PC-3 (cell line): ENCODE measurements at regions of chr13 and their contacts with region 1.

Region 1: DNA sequence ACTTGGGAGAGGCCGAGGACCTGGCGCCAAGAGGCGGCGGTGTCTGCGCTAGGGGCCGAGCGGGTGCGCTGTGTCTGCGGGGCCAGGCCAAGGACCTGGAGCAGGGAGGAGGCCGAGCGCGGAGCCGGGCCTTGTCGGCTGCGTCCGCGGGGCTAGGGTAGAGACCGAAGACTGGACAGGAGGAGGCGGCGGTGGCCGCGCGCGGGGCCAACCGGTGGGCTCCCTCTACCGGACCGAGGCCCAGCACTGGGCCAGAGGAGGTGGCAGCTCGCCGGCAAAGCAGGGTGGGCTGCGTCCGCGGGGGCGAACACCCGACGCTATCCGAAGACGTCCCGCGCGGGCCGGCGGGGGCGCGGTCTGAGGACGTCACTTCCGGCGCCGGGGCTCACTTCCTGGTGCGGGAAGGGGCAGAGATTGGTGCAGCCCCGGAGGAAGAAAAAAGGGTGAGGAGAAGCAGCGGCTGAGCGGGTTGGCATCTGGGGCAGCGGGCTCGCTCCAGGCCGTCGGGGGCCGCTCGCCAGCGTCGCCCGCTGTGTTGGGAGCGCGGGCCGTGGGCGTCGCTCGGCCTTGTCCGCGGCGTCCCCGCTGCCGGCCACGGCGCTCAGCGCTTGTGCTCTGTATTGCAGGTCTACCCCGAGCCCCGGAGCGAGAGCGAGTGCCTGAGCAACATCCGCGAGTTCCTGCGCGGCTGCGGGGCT is 38.3 kb downstream of the ARHGEF7 start:
- DNase-seq: peak; percentile 82
- ATAC-seq: peak; percentile 81
- H3K4me3 ChIP-seq: peak overlapping the region; percentile 93
- H3K27ac ChIP-seq: peak overlapping the region; percentile 72
- H3K4me1 ChIP-seq: peaks cover 19% of the 10 kb centered on the region
- H3K27me3 ChIP-seq: peaks cover 22% of the 10 kb centered on the region
- CTCF ChIP-seq: no peak

Region 2: DNA sequence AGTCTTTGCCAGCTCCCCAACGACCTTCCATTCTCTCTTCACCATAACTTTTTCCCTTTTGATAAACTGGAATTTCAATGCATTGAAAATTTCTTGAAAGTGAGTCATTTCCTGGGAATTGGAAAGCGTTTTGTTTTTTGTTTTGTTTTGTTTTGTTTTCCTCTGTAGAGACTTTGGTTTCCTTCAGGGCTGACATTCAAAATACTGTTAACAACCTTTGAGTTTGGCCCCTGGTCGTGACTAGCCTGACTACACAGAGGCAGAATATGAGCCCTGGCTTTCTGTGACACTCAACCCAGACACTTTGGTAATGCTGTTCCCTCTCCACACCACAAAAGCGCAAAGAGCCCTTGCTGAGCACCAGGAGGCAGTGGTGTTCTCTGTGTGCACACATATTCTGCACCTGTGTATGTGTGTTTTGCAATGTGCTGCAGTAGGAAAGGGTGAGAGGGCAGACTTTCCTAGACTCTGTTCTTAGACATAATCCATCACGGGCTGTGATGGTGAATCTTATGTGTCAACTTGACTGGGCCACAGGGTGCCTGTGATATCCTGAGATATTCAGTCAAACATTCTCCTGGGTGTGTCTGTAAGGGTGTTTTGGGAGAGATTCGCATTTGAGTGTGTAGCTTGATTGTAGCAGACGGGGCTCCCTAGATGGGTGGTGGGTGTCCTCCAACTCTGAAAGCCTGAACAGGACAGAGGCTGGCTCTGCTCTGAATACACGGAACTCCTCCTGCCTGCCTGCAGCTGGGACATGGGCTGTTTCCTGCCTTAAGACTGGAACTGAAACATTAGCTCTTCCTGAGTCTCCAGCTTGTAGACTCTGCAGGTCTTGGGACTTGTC is 209.1 kb before region 1 on chr13:
- CTCF ChIA-PET with region 1: no interaction called
- POLR2A ChIA-PET with region 1: no interaction called
- intact Hi-C with region 1: loop called (anchors 10 kb)
- DNase-seq: peak; percentile 70
- ATAC-seq: peak; percentile 98
- H3K4me3 ChIP-seq: no peak overlapping the region
- H3K27ac ChIP-seq: no peak overlapping the region
- H3K4me1 ChIP-seq: peaks cover 9% of the 10 kb centered on the region
- H3K27me3 ChIP-seq: no peaks in the 10 kb centered on the region
- CTCF ChIP-seq: peak; percentile 86

Region 3: GRCh38 chr13:111066544-111066943 is 86.9 kb before region 1 on chr13:
- CTCF ChIA-PET with region 1: no interaction called
- POLR2A ChIA-PET with region 1: interaction called, 24 read pairs
- intact Hi-C with region 1: no loop called
- DNase-seq: no peak
- ATAC-seq: no peak
- H3K4me3 ChIP-seq: no peak overlapping the region
- H3K27ac ChIP-seq: no peak overlapping the region
- H3K4me1 ChIP-seq: no peaks in the 10 kb centered on the region
- H3K27me3 ChIP-seq: no peaks in the 10 kb centered on the region
- CTCF ChIP-seq: no peak

Region 4: DNA sequence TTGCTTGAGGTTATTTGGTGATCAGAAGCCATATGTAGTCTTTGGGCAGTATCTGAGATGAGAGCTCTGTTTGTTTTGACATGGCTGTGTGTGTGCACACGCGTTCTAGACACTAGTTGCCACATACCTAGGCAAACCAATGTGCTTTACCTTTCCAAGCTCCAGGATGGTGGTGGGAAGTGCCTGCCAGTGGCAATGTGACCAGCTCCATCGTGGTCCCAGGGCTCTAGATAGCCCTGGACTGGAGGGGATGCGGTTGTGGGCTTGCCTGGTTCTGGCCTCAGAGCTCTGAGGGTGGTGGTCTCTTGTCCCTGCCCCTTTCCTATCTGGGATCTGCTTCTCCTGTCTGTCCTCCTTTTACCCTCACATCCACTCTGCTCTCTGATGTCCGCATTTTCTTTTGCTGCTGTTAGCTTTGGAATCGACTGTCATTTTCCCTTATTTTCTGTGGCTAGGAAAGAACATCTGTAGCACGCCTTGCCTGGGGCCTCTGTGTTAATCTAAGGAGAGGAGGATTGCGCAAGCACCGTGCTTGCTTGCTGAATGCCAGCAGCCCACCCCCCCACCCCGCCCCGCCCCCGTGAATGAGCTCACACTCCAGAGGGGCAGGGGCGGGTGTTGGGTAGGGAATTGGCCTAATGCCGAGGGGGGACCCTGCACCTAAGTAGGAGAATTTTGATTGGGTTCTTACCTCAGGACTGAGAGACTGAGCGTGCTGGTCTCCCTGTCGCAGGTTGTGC is 51.2 kb after region 1 on chr13:
- CTCF ChIA-PET with region 1: no interaction called
- POLR2A ChIA-PET with region 1: no interaction called
- intact Hi-C with region 1: loop called (anchors 5 kb)
- DNase-seq: no peak
- ATAC-seq: no peak
- H3K4me3 ChIP-seq: no peak overlapping the region
- H3K27ac ChIP-seq: no peak overlapping the region
- H3K4me1 ChIP-seq: no peaks in the 10 kb centered on the region
- H3K27me3 ChIP-seq: no peaks in the 10 kb centered on the region
- CTCF ChIP-seq: no peak

Region 5: GRCh38 chr13:111422348-111422747 is 268.9 kb after region 1 on chr13:
- CTCF ChIA-PET with region 1: no interaction called
- POLR2A ChIA-PET with region 1: no interaction called
- intact Hi-C with region 1: no loop called
- DNase-seq: no peak
- ATAC-seq: no peak
- H3K4me3 ChIP-seq: no peak overlapping the region
- H3K27ac ChIP-seq: no peak overlapping the region
- H3K4me1 ChIP-seq: 0 out of 2 replicates have a peak, but pooled peaks cover 5% of the 10 kb centered on the region
- H3K27me3 ChIP-seq: peaks cover 50% of the 10 kb centered on the region
- CTCF ChIP-seq: no peak